AG04450 (cell line): ENCODE measurements at regions of chr22 and their contacts with region 1.

Region 1: DNA sequence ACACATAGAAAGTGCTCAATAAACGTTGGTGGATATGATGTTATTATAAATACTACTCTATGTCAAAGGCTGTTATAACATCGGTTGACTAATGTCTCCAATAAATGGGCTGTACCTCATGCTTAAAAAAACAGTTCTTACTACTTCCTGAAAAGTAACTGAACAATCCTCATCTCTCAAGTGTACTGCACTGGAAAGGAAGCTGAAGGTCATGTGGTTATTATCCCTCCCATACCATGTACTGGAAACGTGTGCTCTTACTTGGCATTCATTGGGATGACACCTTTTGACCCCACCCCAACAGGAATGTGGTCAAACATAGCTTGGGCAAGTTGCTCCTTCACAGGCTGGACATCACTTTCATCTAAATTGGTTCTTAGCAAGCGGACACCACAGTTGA is 10.6 kb downstream of the RTCB start:
- DNase-seq: no peak
- H3K4me3 ChIP-seq: no peak overlapping the region
- H3K27ac ChIP-seq: no peak overlapping the region
- H3K27me3 ChIP-seq: no peaks in the 10 kb centered on the region
- CTCF ChIP-seq: no peak

Region 2: GRCh38 chr22:31829505-31829904 is 572.0 kb before region 1 on chr22:
- CTCF ChIA-PET with region 1: no interaction called
- POLR2A ChIA-PET with region 1: no interaction called
- DNase-seq: peak; percentile 82
- H3K4me3 ChIP-seq: no peak overlapping the region
- H3K27ac ChIP-seq: peak overlapping the region; percentile 80
- H3K27me3 ChIP-seq: no peaks in the 10 kb centered on the region
- CTCF ChIP-seq: no peak

Region 3: GRCh38 chr22:32389685-32390084 is 11.8 kb before region 1 on chr22:
- CTCF ChIA-PET with region 1: interaction called, 32 read pairs
- POLR2A ChIA-PET with region 1: no interaction called
- DNase-seq: no peak
- H3K4me3 ChIP-seq: no peak overlapping the region
- H3K27ac ChIP-seq: no peak overlapping the region
- H3K27me3 ChIP-seq: no peaks in the 10 kb centered on the region
- CTCF ChIP-seq: peak; percentile 38

Region 4: DNA sequence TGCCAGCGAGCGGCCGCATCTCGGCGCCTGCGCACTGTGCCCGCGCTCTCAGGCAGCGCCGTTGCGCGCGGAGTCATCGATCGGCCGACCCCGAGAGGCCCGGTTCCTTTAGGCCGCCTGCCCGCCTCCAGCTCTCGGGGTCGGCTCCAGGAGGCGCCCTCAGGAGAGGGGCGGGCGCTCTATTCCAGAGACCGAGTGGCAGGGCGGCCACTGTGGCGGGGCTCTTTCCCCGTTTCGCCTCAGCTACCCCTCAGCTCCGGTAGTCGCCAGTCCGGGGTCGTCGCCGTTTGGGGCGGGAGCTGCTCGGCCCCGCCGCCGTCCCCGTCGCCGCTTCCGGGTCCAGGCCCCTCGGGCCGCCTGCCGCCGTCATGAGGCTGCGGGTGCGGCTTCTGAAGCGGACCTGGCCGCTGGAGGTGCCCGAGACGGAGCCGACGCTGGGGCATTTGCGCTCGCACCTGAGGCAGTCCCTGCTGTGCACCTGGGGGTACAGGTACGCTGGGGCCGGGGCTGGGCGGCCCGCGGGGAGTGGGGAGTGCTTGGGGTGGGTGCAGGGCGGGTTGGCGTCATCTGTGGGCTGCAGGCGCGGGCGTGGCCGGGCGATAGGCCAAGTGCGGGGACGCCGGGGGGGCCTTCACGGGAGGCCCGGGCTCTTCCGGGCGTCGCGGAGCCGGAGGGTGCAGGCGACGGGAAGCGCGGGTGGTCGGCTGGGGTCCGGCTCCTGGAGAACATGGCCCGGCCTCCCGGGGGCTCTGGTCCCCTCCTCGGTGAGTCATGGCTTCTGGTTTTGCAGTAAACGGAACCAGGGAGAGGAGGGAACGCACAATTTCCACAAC is 73.4 kb after region 1 on chr22 and contains the start of gene FBXO7:
- CTCF ChIA-PET with region 1: interaction called, 16 read pairs
- POLR2A ChIA-PET with region 1: no interaction called
- DNase-seq: peak; percentile 79
- H3K4me3 ChIP-seq: peak within 1 kb of the TSS; percentile 90
- H3K27ac ChIP-seq: peak within 1 kb of the TSS; percentile 90
- H3K27me3 ChIP-seq: no peaks in the 10 kb centered on the region
- CTCF ChIP-seq: peak; percentile 40
- polyA plus RNA-seq, gene FBXO7: 144 and 156 TPM in 2 replicates